Caco-2 (cell line): ENCODE measurements at regions of chr11 and their contacts with region 1.

Region 1: GRCh38 chr11:63888170-63889086 is 28.5 kb downstream of the RCOR2 start:
- DNase-seq: peak; percentile 87 to 92
- H3K4me3 ChIP-seq: peak overlapping the region; percentile 56
- H3K4me3 Mint-ChIP-seq: peak overlapping the region; percentile 95
- H3K27ac Mint-ChIP-seq: peak overlapping the region; percentile 98
- H3K4me1 ChIP-seq: peaks cover 33% of the 10 kb centered on the region
- H3K4me1 Mint-ChIP-seq: peaks cover 34% of the 10 kb centered on the region
- H3K27me3 ChIP-seq: no peaks in the 10 kb centered on the region
- H3K27me3 Mint-ChIP-seq: no peaks in the 10 kb centered on the region
- CTCF ChIP-seq: no peak

Region 2: DNA sequence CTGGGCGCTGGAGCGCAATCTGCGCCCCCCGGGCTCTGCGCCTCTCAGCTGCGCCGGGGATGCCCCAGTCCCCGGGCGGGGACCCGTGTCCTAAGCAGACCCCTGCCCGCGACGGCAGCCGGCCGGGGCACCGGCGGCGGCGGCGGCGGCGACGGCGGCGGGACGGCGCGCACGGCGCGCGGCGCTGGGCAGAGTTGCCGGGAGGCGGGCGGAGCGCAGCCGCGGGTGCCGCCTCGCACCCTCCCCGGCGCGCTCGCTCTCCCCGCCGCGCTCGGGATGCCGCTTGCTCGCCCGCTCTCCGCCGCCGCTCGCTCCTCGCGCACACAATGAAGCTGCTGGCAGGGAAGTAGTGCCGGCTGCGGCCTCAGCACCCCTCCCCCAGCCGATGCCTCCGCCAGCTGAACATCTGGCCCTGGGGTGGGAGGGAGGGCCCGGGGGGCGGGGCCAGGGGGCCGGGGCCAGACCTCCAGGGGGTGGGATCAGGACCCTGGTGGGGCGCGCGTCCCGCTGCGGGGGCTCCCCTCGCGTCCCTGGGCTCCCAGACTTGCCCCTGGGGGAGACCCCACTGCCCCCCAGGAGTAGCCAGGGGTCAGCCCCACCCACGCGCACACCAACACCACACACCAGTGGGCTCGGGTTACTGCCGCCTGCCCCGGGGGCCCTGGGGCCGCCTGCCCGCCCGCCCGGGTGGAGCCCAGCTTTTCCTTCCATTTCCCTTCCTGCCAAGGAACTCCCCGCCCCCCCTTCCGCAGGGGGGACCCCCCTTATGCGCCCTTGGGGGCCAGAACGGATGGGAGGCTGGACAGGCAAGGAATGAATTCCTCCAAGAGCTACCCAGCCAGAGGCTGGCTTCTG is 28.6 kb after region 1 on chr11 and contains the start of gene RCOR2:
- CTCF ChIA-PET with region 1: interaction called, 3 read pairs
- POLR2A ChIA-PET with region 1: no interaction called
- intact Hi-C with region 1: loop called (anchors 2 kb)
- DNase-seq: peak; percentile 79 to 83
- H3K4me3 ChIP-seq: peak within 1 kb of the TSS; percentile 67
- H3K4me3 Mint-ChIP-seq: peak within 1 kb of the TSS; percentile 88
- H3K27ac Mint-ChIP-seq: no peak within 1 kb of the TSS
- H3K4me1 ChIP-seq: 0 out of 2 replicates have a peak, but pooled peaks cover 12% of the 10 kb centered on the region
- H3K4me1 Mint-ChIP-seq: no peaks in the 10 kb centered on the region
- H3K27me3 ChIP-seq: no peaks in the 10 kb centered on the region
- H3K27me3 Mint-ChIP-seq: no peaks in the 10 kb centered on the region
- CTCF ChIP-seq: no peak
- total RNA-seq, gene RCOR2: 1.5 and 1.8 TPM in 2 replicates

Region 3: DNA sequence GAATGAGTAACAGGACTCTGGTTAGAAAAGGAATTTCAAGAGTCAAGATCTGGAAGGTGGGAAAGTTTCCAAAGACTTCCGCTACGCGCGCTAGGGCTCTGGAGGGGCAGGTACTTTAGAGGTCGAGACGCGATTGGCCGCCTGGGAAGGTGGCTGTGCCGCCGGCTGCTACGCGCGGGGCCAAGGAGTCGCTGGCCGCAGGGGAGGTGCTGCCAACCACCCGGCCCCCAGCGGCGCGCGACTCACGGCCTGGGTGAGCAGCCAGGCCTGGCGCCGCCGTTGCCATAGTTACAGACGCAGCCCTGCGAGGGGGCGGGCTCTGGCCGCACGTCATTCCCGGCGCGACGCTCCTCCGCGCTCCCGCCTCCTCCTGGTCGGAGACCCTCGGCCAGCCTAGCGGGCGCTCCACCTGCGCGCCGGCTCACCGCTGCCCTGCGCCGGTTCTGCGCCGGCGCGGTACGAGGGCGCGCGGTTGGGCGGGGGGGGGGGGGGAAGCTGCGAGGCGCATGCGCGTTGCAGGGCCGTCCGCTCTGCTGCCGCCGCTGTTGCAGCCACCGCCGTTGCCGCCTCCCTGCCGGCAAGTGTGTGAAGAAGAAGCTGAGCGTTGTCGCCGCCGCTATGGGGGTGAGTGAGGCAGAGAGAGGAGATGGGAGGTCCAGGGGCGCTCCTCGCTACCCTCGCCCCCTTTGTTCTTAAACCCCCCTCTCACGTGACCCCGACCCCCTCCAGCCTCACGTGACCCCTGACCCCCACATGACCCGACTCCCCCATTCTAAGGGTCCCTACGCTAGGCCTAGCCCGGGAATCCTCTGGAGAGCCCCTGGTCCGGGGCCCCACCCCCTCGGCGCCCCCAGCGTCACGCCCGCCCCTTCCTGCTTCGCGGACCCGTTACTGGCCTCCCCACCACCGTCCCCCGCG is 50.3 kb after region 1 on chr11 and contains the start of gene NAA40:
- CTCF ChIA-PET with region 1: no interaction called
- POLR2A ChIA-PET with region 1: interaction called, 3 read pairs
- intact Hi-C with region 1: loop called (anchors 1 kb)
- DNase-seq: peak; percentile 97 to 98
- H3K4me3 ChIP-seq: peak within 1 kb of the TSS; percentile 61
- H3K4me3 Mint-ChIP-seq: peak within 1 kb of the TSS; percentile 100
- H3K27ac Mint-ChIP-seq: peak within 1 kb of the TSS; percentile 98
- H3K4me1 ChIP-seq: no peaks in the 10 kb centered on the region
- H3K4me1 Mint-ChIP-seq: peaks cover 13% of the 10 kb centered on the region
- H3K27me3 ChIP-seq: no peaks in the 10 kb centered on the region
- H3K27me3 Mint-ChIP-seq: no peaks in the 10 kb centered on the region
- CTCF ChIP-seq: no peak
- total RNA-seq, gene NAA40: 42.7 and 43.7 TPM in 2 replicates